Activated T-helper 2 cell treated with anti-CD3 and anti-CD28 coated beads, Interferon-gamma antibody, Interleukin-2, Interleukin-4, amounts not matched to agents 10 μg/mL and 5 μg/mL and 100 μg/mL, durations not matched to agents 14 hours and 24 hours and 36 hours (primary cell): ENCODE measurements at regions of chr2 and their contacts with region 1.

Region 1: DNA sequence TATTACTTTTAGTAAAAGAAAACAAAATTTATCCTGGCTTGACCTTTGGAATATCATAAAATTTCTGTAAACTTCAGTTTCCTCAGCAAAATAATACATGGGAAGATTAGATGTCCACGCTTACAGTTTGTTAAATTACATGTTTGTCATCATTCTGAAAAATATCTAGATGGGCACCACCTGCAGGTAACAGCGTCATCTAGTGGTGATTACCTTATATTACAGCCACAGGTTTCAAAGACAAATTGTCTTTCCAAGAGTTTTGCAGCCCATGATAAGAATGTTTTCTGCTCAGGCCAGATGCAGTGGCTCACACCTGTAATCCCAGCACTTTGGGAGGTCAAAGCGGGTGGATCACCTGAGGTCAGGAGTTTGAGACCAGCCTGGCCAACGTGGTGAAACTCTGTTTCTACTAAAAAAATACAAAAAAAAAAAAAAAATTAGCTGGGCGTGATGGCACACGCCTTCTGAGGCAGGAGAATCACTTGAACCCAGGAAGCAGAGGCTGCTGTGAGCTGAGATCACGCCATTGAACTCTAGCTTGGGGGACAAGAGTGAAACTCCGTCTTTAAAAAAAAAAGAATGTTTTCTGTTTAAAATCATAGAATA is 96.3 kb upstream of the RASGRP3 start:
- DNase-seq: no peak
- H3K4me3 Mint-ChIP-seq: no peak overlapping the region
- H3K27ac Mint-ChIP-seq: no peak overlapping the region
- H3K4me1 Mint-ChIP-seq: no peaks in the 10 kb centered on the region
- H3K27me3 Mint-ChIP-seq: peaks cover 17% of the 10 kb centered on the region

Region 2: DNA sequence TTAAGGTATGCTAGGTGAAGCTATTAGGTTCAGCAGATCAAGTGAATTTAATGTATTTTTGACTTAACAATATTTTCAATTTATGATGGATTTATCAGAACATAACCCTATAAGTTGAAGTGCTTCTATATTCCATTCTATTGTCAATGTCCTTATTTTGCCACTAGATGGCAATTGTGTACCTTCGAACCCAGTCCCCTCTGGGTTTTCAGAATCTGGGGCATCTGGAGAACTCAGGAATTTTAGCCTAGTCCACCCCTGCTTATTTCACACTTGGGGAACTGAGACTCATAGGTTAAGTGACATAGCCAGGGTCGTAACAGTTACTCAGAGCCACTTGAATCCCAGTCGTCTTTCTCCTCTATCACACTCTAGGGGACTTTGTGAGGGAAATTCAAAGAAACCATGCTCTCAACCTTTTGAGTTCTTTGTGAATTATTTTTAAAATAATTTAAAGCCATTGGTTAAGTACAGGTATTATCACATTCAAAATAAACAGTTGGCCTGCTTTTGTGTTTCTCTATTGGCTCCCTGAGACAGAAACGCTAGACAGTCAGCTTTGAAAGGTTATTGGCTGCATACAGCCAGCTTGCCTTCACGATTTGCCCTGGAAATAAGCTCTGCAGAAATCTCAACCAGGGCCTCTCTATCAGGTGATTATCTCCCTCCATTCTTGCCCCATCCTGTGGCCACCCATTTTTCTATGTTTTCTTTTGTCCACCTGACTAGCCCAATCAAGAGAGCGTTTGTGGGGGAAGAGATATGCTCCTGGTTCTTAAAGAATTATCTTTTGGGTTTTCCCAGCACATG is 607.3 kb before region 1 on chr2:
- intact Hi-C with region 1: loop called (anchors 5 kb)
- DNase-seq: no peak
- H3K4me3 Mint-ChIP-seq: no peak overlapping the region
- H3K27ac Mint-ChIP-seq: no peak overlapping the region
- H3K4me1 Mint-ChIP-seq: peaks cover 20% of the 10 kb centered on the region
- H3K27me3 Mint-ChIP-seq: no peaks in the 10 kb centered on the region

Region 3: GRCh38 chr2:32812316-32812715 is 567.8 kb before region 1 on chr2:
- intact Hi-C with region 1: no loop called
- DNase-seq: no peak
- H3K4me3 Mint-ChIP-seq: no peak overlapping the region
- H3K27ac Mint-ChIP-seq: no peak overlapping the region
- H3K4me1 Mint-ChIP-seq: no peaks in the 10 kb centered on the region
- H3K27me3 Mint-ChIP-seq: no peaks in the 10 kb centered on the region

Region 4: DNA sequence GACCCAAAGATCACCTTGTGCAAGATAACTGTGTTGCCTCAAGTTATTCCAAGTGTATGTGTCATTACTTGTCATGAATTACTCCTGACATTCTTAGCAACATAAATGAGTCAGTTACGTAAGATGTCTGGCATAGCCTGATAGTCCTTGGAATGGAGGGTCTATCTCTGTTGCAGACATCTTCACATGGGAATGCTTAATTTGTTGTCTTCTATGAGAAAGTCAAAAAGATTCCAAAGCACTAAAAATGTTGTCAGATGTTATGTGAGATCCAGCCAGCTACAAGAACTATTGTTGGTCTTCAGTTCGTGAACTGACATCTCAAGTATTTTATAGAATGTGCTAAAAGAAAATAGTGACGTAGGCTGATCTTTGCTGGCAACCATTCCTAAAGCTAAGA is 81.9 kb before region 1 on chr2:
- intact Hi-C with region 1: no loop called
- DNase-seq: no peak
- H3K4me3 Mint-ChIP-seq: no peak overlapping the region
- H3K27ac Mint-ChIP-seq: no peak overlapping the region
- H3K4me1 Mint-ChIP-seq: no peaks in the 10 kb centered on the region
- H3K27me3 Mint-ChIP-seq: peaks cover 3% of the 10 kb centered on the region

Region 5: GRCh38 chr2:33426666-33427231 is 46.6 kb after region 1 on chr2:
- intact Hi-C with region 1: no loop called
- DNase-seq: no peak
- H3K4me3 Mint-ChIP-seq: no peak overlapping the region
- H3K27ac Mint-ChIP-seq: no peak overlapping the region
- H3K4me1 Mint-ChIP-seq: no peaks in the 10 kb centered on the region
- H3K27me3 Mint-ChIP-seq: peaks cover 2% of the 10 kb centered on the region